Endothelial cell of umbilical vein (primary cell): ENCODE measurements at regions of chr1 and their contacts with region 1.

Region 1: GRCh38 chr1:19918057-19918456 is 5.4 kb downstream of the PLA2G2E start:
- DNase-seq: peak; percentile 72
- H3K4me3 ChIP-seq: no peak overlapping the region
- H3K27ac ChIP-seq: no peak overlapping the region
- H3K4me1 ChIP-seq: no peaks in the 10 kb centered on the region
- H3K27me3 ChIP-seq: no peaks in the 10 kb centered on the region
- CTCF ChIP-seq: peak; percentile 85 to 87
- POLR2A ChIP-seq: no peak

Region 2: GRCh38 chr1:19974822-19975416 is 56.9 kb after region 1 on chr1:
- CTCF ChIA-PET with region 1: interaction called, 13 read pairs
- POLR2A ChIA-PET with region 1: no interaction called
- dilution Hi-C with region 1: no loop called
- intact Hi-C with region 1: no loop called
- DNase-seq: peak; percentile 69
- H3K4me3 ChIP-seq: no peak overlapping the region
- H3K27ac ChIP-seq: no peak overlapping the region
- H3K4me1 ChIP-seq: no peaks in the 10 kb centered on the region
- H3K27me3 ChIP-seq: peaks cover 0 to 2% of the 10 kb centered on the region in 2 experiments
- CTCF ChIP-seq: peak; percentile 64 to 69
- POLR2A ChIP-seq: no peak

Region 3: GRCh38 chr1:20100632-20101355 is 182.7 kb after region 1 on chr1:
- CTCF ChIA-PET with region 1: no interaction called
- POLR2A ChIA-PET with region 1: no interaction called
- dilution Hi-C with region 1: no loop called
- intact Hi-C with region 1: loop called (anchors 1 kb)
- DNase-seq: peak; percentile 43
- H3K4me3 ChIP-seq: no peak overlapping the region
- H3K27ac ChIP-seq: no peak overlapping the region
- H3K4me1 ChIP-seq: no peaks in the 10 kb centered on the region
- H3K27me3 ChIP-seq: peaks cover 0 to 2% of the 10 kb centered on the region in 2 experiments
- CTCF ChIP-seq: peak; percentile 59 to 71
- POLR2A ChIP-seq: no peak

Region 4: DNA sequence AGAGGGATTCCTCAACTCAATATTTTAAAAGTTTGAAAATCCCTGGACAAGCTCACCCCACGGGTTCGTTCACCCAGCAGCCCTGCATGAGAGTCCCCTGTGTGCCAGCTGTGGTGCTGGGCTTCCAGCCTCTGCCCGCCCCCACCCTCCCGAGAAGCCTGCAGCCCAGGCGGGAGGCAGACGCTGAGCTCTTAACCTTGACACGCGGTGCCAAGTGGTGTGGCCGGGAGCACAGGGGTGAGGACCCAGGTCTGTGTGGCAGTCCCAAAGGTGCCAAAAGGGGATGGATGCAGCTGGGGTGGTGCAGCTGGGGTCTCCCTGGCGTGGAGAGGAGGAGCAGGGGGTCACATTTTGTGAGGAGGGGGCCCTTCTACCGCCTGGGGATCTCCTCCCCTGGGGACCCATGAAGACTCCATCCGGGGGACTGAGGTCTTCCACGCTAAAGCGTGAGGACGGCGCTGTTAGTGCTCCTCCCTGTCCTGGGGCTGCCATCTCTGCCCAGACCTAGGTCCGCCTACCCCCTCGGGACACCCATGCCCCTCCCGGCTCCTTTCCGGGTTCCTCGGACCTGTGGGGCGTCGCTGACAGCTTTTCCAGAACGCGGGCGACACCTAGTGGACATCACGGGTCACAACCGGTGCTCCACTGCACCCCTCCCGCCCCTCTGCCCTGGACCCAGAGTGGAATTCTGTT is 234.0 kb after region 1 on chr1:
- CTCF ChIA-PET with region 1: interaction called, 61 read pairs
- POLR2A ChIA-PET with region 1: no interaction called
- dilution Hi-C with region 1: no loop called
- intact Hi-C with region 1: loop called (anchors 1 kb)
- DNase-seq: peak; percentile 42
- H3K4me3 ChIP-seq: peak overlapping the region in 1 of 3 experiments; percentile 7
- H3K27ac ChIP-seq: no peak overlapping the region
- H3K4me1 ChIP-seq: peaks cover 4% of the 10 kb centered on the region
- H3K27me3 ChIP-seq: no peaks in the 10 kb centered on the region
- CTCF ChIP-seq: peak; percentile 87 to 91
- POLR2A ChIP-seq: no peak

Region 5: GRCh38 chr1:20165522-20165951 is 247.5 kb after region 1 on chr1:
- CTCF ChIA-PET with region 1: interaction called, 18 read pairs
- POLR2A ChIA-PET with region 1: no interaction called
- dilution Hi-C with region 1: no loop called
- intact Hi-C with region 1: no loop called
- DNase-seq: no peak
- H3K4me3 ChIP-seq: no peak overlapping the region
- H3K27ac ChIP-seq: no peak overlapping the region
- H3K4me1 ChIP-seq: no peaks in the 10 kb centered on the region
- H3K27me3 ChIP-seq: no peaks in the 10 kb centered on the region
- CTCF ChIP-seq: peak in 1 of 2 donors; percentile 11
- POLR2A ChIP-seq: no peak

Region 6: GRCh38 chr1:20212685-20213331 is 294.8 kb after region 1 on chr1:
- CTCF ChIA-PET with region 1: interaction called, 5 read pairs
- POLR2A ChIA-PET with region 1: no interaction called
- dilution Hi-C with region 1: no loop called
- intact Hi-C with region 1: loop called (anchors 5 kb)
- DNase-seq: peak; percentile 39
- H3K4me3 ChIP-seq: no peak overlapping the region
- H3K27ac ChIP-seq: no peak overlapping the region
- H3K4me1 ChIP-seq: no peaks in the 10 kb centered on the region
- H3K27me3 ChIP-seq: peaks cover 7% of the 10 kb centered on the region in 2 experiments
- CTCF ChIP-seq: peak; percentile 76 to 79
- POLR2A ChIP-seq: no peak

Region 7: DNA sequence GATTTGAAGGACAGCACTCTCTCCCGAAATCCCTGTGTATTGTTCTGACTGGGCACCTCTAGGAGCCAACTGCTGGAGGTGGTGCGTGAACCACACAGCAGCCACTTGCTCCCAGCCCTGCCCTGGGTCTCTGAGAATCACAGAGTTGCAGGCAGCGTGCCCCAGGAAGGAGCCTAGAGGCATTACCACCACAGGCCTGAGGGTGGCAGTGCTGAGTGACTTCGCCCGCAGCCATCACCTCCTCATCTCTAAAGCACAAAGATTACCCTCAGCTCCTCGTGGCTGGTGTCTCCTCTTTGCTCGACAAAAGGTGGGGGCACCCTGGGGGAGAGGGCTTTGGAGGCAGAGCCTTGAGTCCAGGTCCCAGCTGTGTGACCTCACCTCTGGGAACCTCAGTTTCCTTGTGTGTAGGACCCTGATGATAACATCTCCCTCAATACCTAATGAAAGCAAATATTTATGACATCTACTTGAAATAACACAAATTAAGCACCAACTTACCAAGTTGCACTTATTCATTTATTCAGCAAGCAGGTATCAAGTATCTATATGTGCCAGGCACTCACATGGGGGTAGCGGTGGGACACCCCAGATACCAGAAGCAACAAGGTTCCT is 458.9 kb after region 1 on chr1:
- CTCF ChIA-PET with region 1: no interaction called
- POLR2A ChIA-PET with region 1: no interaction called
- dilution Hi-C with region 1: no loop called
- intact Hi-C with region 1: loop called (anchors 10 kb)
- DNase-seq: peak; percentile 58
- H3K4me3 ChIP-seq: no peak overlapping the region
- H3K27ac ChIP-seq: no peak overlapping the region
- H3K4me1 ChIP-seq: no peaks in the 10 kb centered on the region
- H3K27me3 ChIP-seq: no peaks in the 10 kb centered on the region
- CTCF ChIP-seq: peak; percentile 73 to 91
- POLR2A ChIP-seq: no peak